Body of pancreas (tissue), 4 donors: ENCODE measurements at regions of chr16 and their contacts with region 1.

Region 1: GRCh38 chr16:66859397-66860068 is 15.3 kb downstream of the CA7 start:
- DNase-seq: no peak
- ATAC-seq: no peak
- H3K4me3 ChIP-seq: no peak overlapping the region
- H3K27ac ChIP-seq: no peak overlapping the region
- H3K4me1 ChIP-seq: no peaks in the 10 kb centered on the region
- H3K27me3 ChIP-seq: no peaks in the 10 kb centered on the region
- CTCF ChIP-seq: no peak
- POLR2A ChIP-seq: no peak

Region 2: GRCh38 chr16:66608241-66609138 is 251.0 kb before region 1 on chr16:
- intact Hi-C with region 1: loop called (anchors 10 kb)
- DNase-seq: peak; percentile 90 to 95 (median 92)
- ATAC-seq: peak; percentile 81
- H3K4me3 ChIP-seq: no peak overlapping the region
- H3K27ac ChIP-seq: peak overlapping the region in 2 of 4 donors; percentile 9 to 15
- H3K4me1 ChIP-seq: peaks cover 33% of the 10 kb centered on the region
- H3K27me3 ChIP-seq: peaks cover 0 to 4% of the 10 kb centered on the region in 2 donors
- CTCF ChIP-seq: peak; percentile 85 to 95 (median 90)
- POLR2A ChIP-seq: no peak